B cell (primary cell): ENCODE measurements at regions of chr2 and their contacts with region 1.

Region 1: GRCh38 chr2:135473567-135473966 is 57.5 kb downstream of the ZRANB3 start:
- DNase-seq: peak; percentile 20
- ATAC-seq: no peak
- H3K4me3 ChIP-seq: no peak overlapping the region
- H3K4me3 Mint-ChIP-seq: no peak overlapping the region
- H3K27ac ChIP-seq: no peak overlapping the region
- H3K27ac Mint-ChIP-seq: no peak overlapping the region
- H3K4me1 ChIP-seq: no peaks in the 10 kb centered on the region
- H3K4me1 Mint-ChIP-seq: no peaks in the 10 kb centered on the region
- H3K27me3 ChIP-seq: no peaks in the 10 kb centered on the region
- H3K27me3 Mint-ChIP-seq: no peaks in the 10 kb centered on the region
- CTCF ChIP-seq: peak; percentile 52

Region 2: GRCh38 chr2:135457279-135457678 is 16.3 kb before region 1 on chr2:
- CTCF ChIA-PET with region 1: interaction called, 10 read pairs
- POLR2A ChIA-PET with region 1: no interaction called
- intact Hi-C with region 1: no loop called
- DNase-seq: no peak
- ATAC-seq: no peak
- H3K4me3 ChIP-seq: no peak overlapping the region
- H3K4me3 Mint-ChIP-seq: no peak overlapping the region
- H3K27ac ChIP-seq: no peak overlapping the region
- H3K27ac Mint-ChIP-seq: no peak overlapping the region
- H3K4me1 ChIP-seq: no peaks in the 10 kb centered on the region
- H3K4me1 Mint-ChIP-seq: no peaks in the 10 kb centered on the region
- H3K27me3 ChIP-seq: no peaks in the 10 kb centered on the region
- H3K27me3 Mint-ChIP-seq: no peaks in the 10 kb centered on the region
- CTCF ChIP-seq: no peak

Region 3: DNA sequence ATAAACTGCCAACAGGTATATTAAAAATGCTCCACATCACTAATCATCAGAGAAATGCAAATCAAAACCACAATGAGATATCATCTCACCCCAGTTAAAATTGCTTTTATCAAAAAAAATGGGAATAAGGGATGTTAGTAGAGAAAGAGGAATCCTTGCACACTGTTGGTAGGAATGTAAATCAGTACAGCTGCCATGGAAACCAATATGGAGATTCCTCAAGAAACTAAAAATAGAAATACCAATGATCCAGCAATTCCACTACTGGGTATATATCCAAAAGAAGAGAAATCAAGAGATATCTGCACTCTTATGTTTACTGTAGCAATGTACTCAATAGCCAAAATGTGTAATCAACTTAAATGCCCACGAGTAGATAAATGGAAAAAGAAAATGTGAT is 16.8 kb after region 1 on chr2:
- CTCF ChIA-PET with region 1: no interaction called
- POLR2A ChIA-PET with region 1: no interaction called
- intact Hi-C with region 1: loop called (anchors 1 kb)
- DNase-seq: no peak
- ATAC-seq: no peak
- H3K4me3 ChIP-seq: no peak overlapping the region
- H3K4me3 Mint-ChIP-seq: no peak overlapping the region
- H3K27ac ChIP-seq: no peak overlapping the region
- H3K27ac Mint-ChIP-seq: no peak overlapping the region
- H3K4me1 ChIP-seq: no peaks in the 10 kb centered on the region
- H3K4me1 Mint-ChIP-seq: no peaks in the 10 kb centered on the region
- H3K27me3 ChIP-seq: no peaks in the 10 kb centered on the region
- H3K27me3 Mint-ChIP-seq: no peaks in the 10 kb centered on the region
- CTCF ChIP-seq: no peak

Region 4: DNA sequence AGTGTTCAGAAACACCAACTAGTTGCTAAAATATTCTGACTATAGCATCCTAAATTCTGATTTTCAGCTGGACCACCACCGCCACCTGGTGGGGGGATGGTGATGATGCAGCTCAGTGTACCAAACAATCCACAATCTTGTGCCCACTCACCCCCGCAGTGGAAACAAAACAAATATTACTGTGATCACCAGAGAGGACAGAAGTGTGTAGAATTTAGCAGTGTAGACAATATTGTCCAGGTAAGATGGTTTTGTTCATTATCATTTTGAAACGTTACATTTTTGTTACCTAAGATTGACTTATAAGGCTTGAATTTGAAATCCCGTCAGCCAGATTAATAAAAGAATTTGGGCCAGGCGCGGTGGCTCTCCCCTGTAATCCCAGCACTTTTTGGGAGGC is 236.4 kb after region 1 on chr2:
- CTCF ChIA-PET with region 1: interaction called, 73 read pairs
- POLR2A ChIA-PET with region 1: no interaction called
- intact Hi-C with region 1: no loop called
- DNase-seq: peak; percentile 70
- ATAC-seq: peak; percentile 63
- H3K4me3 ChIP-seq: no peak overlapping the region
- H3K4me3 Mint-ChIP-seq: no peak overlapping the region
- H3K27ac ChIP-seq: no peak overlapping the region
- H3K27ac Mint-ChIP-seq: no peak overlapping the region
- H3K4me1 ChIP-seq: no peaks in the 10 kb centered on the region
- H3K4me1 Mint-ChIP-seq: no peaks in the 10 kb centered on the region
- H3K27me3 ChIP-seq: no peaks in the 10 kb centered on the region
- H3K27me3 Mint-ChIP-seq: no peaks in the 10 kb centered on the region
- CTCF ChIP-seq: peak; percentile 94